ENCODE measurements at regions of chr7 and their contacts with region 1.

Region 1: GRCh38 chr7:130398511-130399090 is 18.3 kb downstream of the CPA1 start:
- DNase-seq: no peak
- ATAC-seq: peak; percentile 15; the same call in 2 of the 3 replicates
- H3K4me3 ChIP-seq: no peak overlapping the region
- H3K27ac ChIP-seq: no peak overlapping the region
- H3K4me1 ChIP-seq: no peaks in the 10 kb centered on the region; a peak in 1 of 5 replicates
- H3K27me3 ChIP-seq: peaks cover 3 to 21% of the 10 kb centered on the region in 2 experiments; a peak in 2 of 5 replicates
- CTCF ChIP-seq: no peak
- EP300 ChIP-seq: no peak
- POLR2A ChIP-seq: no peak
- RAD21 ChIP-seq: no peak

Region 2: DNA sequence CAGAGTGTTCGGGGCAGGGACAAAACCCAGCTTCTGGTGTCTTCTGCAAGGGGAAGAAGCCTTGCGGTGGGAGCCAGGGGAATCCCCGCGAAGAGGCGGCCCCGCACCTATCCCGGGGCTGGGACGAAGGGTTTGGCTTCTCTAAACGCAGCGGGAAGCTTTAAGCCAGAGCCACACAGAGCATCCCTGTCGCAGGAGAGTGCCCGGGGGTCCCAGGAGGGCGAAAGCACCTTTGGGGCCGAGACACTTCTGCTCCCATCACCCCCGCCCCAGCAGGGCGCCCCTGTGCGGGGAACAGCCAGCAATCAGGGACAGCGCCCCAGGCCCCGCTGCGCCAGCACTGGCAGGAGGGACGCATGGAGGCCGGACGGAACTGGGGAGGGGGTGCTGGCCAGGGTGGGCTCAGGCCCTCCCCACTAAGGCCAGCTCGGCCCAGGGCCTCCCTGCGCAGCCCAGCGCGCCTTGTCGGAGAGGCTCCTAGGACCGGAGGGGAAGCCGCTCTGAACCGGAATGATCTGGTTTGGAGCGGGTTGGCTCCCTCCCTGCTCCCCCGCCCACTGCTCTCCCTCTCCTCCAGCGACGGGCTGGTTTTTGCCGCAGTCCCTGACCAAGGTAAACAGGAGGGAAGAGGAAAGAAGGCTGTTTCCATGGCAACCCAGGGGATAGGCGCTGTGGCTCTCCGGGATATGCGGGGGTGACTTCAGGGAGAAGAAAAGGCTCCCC is 257.3 kb before region 1 on chr7:
- CTCF ChIA-PET with region 1: no interaction called
- POLR2A ChIA-PET with region 1: no interaction called
- in situ Hi-C with region 1: no loop called
- intact Hi-C with region 1: no loop called
- DNase-seq: peak; percentile 81 to 87 (median 85)
- ATAC-seq: peak; percentile 80
- H3K4me3 ChIP-seq: 0 out of 2 replicates have a peak overlapping the region, but pooled peaks have one; percentile 3
- H3K27ac ChIP-seq: peak overlapping the region; percentile 66
- H3K4me1 ChIP-seq: peaks cover 43 to 47% of the 10 kb centered on the region in 2 experiments
- H3K27me3 ChIP-seq: no peaks in the 10 kb centered on the region
- CTCF ChIP-seq: no peak
- EP300 ChIP-seq: no peak; the same call in 1 of the 2 replicates
- POLR2A ChIP-seq: 0 out of 2 replicates have a peak, but pooled peaks have one; percentile 51
- RAD21 ChIP-seq: no peak

Region 3: GRCh38 chr7:130473876-130474275 is 75.3 kb after region 1 on chr7:
- CTCF ChIA-PET with region 1: no interaction called
- POLR2A ChIA-PET with region 1: no interaction called
- in situ Hi-C with region 1: no loop called
- intact Hi-C with region 1: loop called (anchors 2 kb)
- DNase-seq: no peak
- ATAC-seq: no peak
- H3K4me3 ChIP-seq: no peak overlapping the region
- H3K27ac ChIP-seq: no peak overlapping the region
- H3K4me1 ChIP-seq: no peaks in the 10 kb centered on the region
- H3K27me3 ChIP-seq: peaks cover 15 to 24% of the 10 kb centered on the region in 2 experiments
- CTCF ChIP-seq: no peak
- EP300 ChIP-seq: no peak
- POLR2A ChIP-seq: no peak
- RAD21 ChIP-seq: no peak